PC-3 (cell line): ENCODE measurements at regions of chr19 and their contacts with region 1.

Region 1: DNA sequence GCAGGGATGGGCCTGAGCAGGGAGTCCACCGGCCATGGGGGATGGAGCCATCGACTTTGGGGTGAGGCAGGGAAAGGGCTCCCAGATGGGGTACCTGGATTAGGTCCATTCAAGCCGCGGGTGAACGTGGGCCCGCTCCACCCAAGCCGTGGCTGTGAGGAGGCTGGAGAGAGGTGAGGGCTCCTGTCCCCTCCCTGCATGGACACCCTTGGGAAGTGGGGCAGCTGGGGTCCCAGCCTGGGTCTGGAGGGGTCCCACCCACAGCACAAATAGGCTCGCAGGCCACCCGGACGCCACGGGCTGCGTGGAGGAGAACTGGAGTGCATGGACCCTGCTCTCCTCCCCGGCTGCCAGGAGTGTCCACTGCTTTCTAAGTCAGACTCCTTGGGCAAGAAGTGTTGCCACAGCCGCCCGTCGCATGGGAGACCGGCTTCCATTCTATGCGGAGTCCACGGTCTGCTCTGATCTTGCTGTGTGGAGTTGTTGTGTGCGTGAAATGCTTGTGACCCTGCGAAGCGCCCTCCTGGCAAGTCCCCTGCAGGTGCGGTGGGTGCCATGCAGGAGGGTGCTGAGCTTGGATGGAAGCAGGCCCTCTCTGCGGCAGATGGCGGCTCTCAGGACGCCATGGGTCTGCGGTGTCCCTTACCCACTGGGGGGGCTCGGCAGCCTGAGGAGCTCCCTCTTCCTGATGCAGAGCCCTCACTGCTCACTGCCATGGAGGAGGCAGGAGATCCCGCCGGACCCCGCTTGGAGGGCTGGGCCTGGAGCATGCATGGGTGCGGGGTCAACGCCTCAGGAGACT is 2.0 kb downstream of the DAZAP1 start:
- DNase-seq: no peak
- ATAC-seq: no peak
- H3K4me3 ChIP-seq: peak overlapping the region; percentile 80
- H3K27ac ChIP-seq: peak overlapping the region; percentile 77
- H3K4me1 ChIP-seq: peaks cover 28% of the 10 kb centered on the region
- H3K27me3 ChIP-seq: no peaks in the 10 kb centered on the region
- CTCF ChIP-seq: no peak

Region 2: GRCh38 chr19:1291761-1292418 is 117.5 kb before region 1 on chr19:
- CTCF ChIA-PET with region 1: interaction called, 16 read pairs
- POLR2A ChIA-PET with region 1: no interaction called
- intact Hi-C with region 1: no loop called
- DNase-seq: no peak
- ATAC-seq: peak; percentile 19; the same call in 1 of the 2 replicates
- H3K4me3 ChIP-seq: no peak overlapping the region
- H3K27ac ChIP-seq: no peak overlapping the region
- H3K4me1 ChIP-seq: no peaks in the 10 kb centered on the region
- H3K27me3 ChIP-seq: peaks cover 35% of the 10 kb centered on the region
- CTCF ChIP-seq: no peak